ENCODE measurements at regions of chr1 and their contacts with region 1.

Region 1: DNA sequence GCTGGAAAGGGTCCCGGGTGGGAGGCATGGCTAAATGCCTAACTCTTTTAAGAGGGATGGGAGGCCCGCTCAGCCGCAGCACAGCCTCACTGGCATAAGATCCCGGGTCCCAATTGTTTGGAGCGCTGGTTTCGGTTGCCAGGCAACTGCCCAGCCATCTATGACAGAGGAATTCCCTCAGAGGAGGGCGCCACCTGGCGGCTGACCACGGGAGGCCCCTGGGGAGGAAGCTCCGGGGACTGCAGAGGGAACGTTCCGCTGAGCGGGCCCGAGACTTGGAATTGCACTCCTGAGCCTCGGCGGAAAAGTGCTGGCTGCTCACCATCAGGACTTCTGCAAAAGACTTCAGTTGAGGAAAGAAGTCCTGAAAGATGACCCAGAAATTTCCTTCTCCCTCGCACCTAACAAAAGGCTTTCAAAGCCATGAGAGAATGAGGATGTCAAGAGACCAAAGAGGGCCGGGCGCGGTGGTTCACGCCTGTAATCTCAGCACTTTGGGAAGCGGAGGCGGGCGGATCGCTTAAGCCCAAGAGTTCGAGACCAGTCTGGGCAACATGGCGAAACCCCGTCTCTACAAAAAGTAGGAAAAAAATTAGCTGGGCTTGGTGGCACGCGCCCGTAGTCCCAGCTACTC is 1.1 kb upstream of the ELAPOR1 start:
- DNase-seq: peak; percentile 90 to 97 (median 94)
- ATAC-seq: peak; percentile 92 to 98 (median 96)
- H3K4me3 ChIP-seq: peak overlapping the region in 10 of 12 donors; percentile 4 to 54 (median 40)
- H3K27ac ChIP-seq: no peak overlapping the region
- H3K4me1 ChIP-seq: peaks cover 0 to 28% (median 18%) of the 10 kb centered on the region in 12 donors
- H3K27me3 ChIP-seq: peaks cover 0 to 42% (median 24%) of the 10 kb centered on the region in 9 donors
- CTCF ChIP-seq: peak; percentile 94 to 99 (median 98)
- POLR2A ChIP-seq: peak in 1 of 2 donors; percentile 13

Region 2: DNA sequence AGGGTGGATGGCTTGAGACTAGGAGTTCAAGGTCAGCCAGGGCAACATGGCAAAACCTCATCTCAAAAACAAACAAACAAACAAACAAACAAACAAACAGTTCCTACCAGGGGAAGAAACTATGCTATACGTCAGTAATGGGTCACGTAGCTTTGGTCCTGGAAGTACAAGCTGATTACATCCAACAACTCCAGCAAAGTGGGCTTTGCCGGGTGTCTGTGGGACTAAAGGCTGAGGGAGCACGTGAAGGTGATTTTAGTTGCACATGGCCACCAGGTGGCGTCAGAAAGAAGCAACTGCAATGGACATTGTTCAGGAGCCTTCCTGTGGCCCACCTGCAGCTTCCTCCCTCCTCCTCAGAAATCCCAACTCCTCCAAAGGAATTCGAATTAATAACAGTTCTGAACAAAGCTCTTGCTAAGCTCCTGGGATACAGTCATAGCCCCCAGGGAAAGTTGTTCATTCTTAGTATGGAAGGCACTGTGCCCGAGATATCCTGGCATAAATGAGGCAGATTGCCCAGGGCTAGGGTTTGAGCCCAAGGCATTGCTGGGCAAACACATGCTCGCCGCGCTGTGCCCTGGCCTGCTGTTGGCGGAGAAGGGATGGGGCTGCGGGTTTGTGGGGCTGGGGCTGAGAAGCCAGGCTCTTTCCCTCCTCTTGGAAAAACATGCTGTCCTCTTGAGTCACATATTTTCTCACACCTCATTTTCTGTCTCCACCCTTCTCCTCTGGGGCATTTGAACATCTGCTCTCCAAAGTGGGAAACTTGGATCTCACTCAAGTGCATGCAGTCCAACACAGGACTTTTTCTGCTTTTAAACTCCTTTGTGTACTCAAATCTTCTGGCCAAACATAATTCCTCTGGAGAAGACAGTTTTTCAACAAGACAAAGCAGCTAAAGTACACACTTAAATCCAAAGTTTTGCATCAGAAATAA is 284.5 kb before region 1 on chr1:
- intact Hi-C with region 1: loop called in 2 of 10 experiments (anchors 5 to 10 kb)
- DNase-seq: peak; percentile 72 to 85 (median 79)
- ATAC-seq: peak; percentile 52 to 71 (median 66)
- H3K4me3 ChIP-seq: no peak overlapping the region
- H3K27ac ChIP-seq: peak overlapping the region in 10 of 12 donors; percentile 8 to 88 (median 58)
- H3K4me1 ChIP-seq: peaks cover 0 to 38% (median 27%) of the 10 kb centered on the region in 12 donors
- H3K27me3 ChIP-seq: no peaks in the 10 kb centered on the region
- CTCF ChIP-seq: peak; percentile 56 to 89 (median 76)
- POLR2A ChIP-seq: no peak

Region 3: GRCh38 chr1:108963052-108963686 is 149.6 kb before region 1 on chr1 and contains the start of gene CLCC1:
- intact Hi-C with region 1: loop called in 7 of 10 experiments (anchors 2 to 10 kb)
- DNase-seq: peak; percentile 94 to 95 (median 95)
- ATAC-seq: peak; percentile 95 to 99 (median 98)
- H3K4me3 ChIP-seq: peak within 1 kb of the TSS; percentile 66 to 87 (median 77)
- H3K27ac ChIP-seq: peak within 1 kb of the TSS; percentile 85 to 99 (median 96)
- H3K4me1 ChIP-seq: peaks cover 0 to 26% (median 14%) of the 10 kb centered on the region in 12 donors
- H3K27me3 ChIP-seq: no peaks in the 10 kb centered on the region
- CTCF ChIP-seq: peak in 1 of 12 donors; percentile 9
- POLR2A ChIP-seq: peak in 1 of 2 donors; percentile 90
- total RNA-seq, gene CLCC1: 21.6 to 33.0 (median 27.9) TPM

Region 4: DNA sequence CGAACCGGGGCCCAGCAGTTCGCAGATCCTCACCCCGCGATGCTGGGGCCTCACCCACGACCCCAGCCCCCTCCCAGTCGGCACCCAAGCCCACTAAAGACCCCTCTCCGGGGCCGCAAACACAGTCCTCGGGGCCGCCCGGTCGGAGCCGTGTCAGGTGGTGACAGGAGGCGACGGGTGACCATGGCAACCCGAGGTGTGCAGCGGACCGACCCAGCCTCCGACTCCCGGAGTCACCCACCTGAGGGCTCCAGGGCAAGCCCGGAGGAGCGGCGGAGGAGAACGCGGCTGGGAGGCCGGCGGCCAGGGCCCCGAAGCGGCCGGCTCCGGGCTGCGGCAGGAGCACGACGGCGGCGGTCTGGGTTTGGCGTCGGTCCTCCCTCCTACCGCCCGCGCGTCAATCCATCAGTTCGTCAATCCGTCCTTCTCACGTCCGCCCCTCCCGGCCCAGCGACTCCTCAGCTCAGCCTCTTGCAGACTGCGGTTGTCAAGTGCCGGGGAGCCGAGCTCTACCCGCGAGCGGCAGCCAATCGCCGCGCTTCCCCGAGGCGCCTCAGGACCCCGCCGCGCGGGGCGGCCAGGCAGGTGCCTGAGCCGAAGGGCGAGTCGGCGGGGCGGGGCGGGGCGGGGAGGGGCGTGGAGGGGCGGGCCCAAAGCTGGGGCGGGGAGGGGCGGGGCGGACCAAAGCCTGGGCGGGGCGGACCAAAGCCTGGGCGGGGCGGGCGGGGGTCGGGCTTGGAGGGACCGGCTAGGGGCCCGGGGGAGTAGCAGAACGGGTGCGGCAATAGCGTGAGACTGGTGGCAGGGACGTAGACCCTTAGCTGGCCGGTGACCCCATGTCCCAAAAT is 70.9 kb before region 1 on chr1 and contains the start of gene WDR47:
- intact Hi-C with region 1: loop called in 3 of 10 experiments (anchors 2 to 5 kb)
- DNase-seq: peak; percentile 95 to 98 (median 97)
- ATAC-seq: peak; percentile 97 to 99 (median 98)
- H3K4me3 ChIP-seq: peak within 1 kb of the TSS; percentile 75 to 100 (median 96)
- H3K27ac ChIP-seq: peak within 1 kb of the TSS; percentile 72 to 94 (median 86)
- H3K4me1 ChIP-seq: peaks cover 0 to 18% (median 9%) of the 10 kb centered on the region in 12 donors
- H3K27me3 ChIP-seq: no peaks in the 10 kb centered on the region
- CTCF ChIP-seq: peak in 2 of 12 donors; percentile 8 to 19
- POLR2A ChIP-seq: peak; percentile 81 to 97
- total RNA-seq, gene WDR47: 12.2 to 22.3 (median 14.9) TPM

Region 5: GRCh38 chr1:109060707-109061106 is 52.1 kb before region 1 on chr1:
- intact Hi-C with region 1: no loop called
- DNase-seq: no peak
- ATAC-seq: no peak
- H3K4me3 ChIP-seq: no peak overlapping the region
- H3K27ac ChIP-seq: peak overlapping the region in 1 of 12 donors; percentile 3
- H3K4me1 ChIP-seq: peaks cover 0 to 5% (median 0%) of the 10 kb centered on the region in 12 donors
- H3K27me3 ChIP-seq: no peaks in the 10 kb centered on the region
- CTCF ChIP-seq: no peak
- POLR2A ChIP-seq: no peak

Region 6: GRCh38 chr1:109249654-109250465 is 137.1 kb after region 1 on chr1:
- intact Hi-C with region 1: loop called in 1 of 10 experiments (anchors 10 kb)
- DNase-seq: peak in 2 of 5 donors; percentile 20 to 62
- ATAC-seq: no peak
- H3K4me3 ChIP-seq: peak overlapping the region; percentile 21 to 85 (median 57)
- H3K27ac ChIP-seq: peak overlapping the region in 1 of 12 donors; percentile 28
- H3K4me1 ChIP-seq: peaks cover 0 to 33% (median 20%) of the 10 kb centered on the region in 12 donors
- H3K27me3 ChIP-seq: peaks cover 0 to 21% (median 0%) of the 10 kb centered on the region in 9 donors
- CTCF ChIP-seq: no peak
- POLR2A ChIP-seq: no peak

Measured in heart left ventricle (tissue), 16 donors.